ENCODE measurements at regions of chr1 and their contacts with region 1.

Region 1: DNA sequence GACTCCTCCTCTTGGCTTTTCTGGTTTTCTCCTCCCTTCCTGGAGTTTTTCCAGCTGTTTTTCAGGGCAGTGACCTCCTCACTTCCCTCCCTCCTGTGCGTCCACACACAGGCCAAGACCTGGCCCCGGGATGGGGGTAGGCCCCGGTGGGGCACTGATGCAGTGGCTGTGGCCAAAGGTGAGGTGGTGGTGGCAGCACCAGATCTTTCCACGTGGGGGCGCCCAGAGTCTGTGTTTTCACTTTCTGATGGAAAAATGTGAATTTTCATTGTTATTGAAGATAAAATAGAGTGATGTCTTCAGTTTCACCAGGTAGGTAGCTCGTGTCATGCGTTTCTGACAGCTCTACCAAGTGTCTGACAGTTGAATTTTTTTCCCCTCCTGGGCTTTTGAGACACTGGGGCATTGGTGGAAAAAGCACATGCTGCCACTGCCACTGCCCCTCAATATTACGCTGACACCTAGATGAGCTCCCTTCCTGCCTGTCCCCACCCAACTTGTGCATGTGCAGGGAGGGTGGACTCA is 39.9 kb upstream of the MAGOH start:
- ATAC-seq: peak; percentile 28 to 72 (median 54)
- H3K4me3 ChIP-seq: no peak overlapping the region
- H3K27ac ChIP-seq: no peak overlapping the region
- H3K4me1 ChIP-seq: peaks cover 2 to 3% of the 10 kb centered on the region in 2 donors

Region 2: GRCh38 chr1:53381790-53382401 is 103.6 kb after region 1 on chr1:
- in situ Hi-C with region 1: loop called in 4 of 9 experiments (anchors 5 to 25 kb)
- ATAC-seq: peak in 2 of 8 experiments; percentile 21 to 51
- H3K4me3 ChIP-seq: no peak overlapping the region
- H3K27ac ChIP-seq: no peak overlapping the region
- H3K4me1 ChIP-seq: peaks cover 6 to 13% of the 10 kb centered on the region in 2 donors

Region 3: DNA sequence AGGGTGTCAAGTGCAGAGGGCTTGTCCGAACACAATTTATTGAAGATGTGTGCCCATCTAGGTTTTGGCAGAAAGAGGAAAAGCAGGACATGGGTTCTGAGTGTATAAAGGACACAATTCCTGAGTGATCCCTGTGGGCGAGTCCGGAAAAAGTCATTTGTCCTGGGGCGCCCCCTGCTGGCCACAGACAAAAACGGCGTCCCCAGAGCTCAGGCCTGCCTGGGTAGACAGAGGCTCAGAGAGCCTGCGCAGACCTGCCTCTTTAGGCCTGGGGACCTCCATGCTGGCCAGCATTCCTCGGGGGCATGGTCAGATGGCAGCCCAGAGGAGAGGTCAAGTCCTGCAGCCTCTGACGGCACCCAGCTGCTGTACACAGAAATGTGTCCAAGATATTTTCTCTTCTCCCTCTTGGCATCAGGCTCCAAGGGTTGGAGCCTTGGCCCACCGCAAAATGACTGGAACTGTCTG is 115.1 kb after region 1 on chr1:
- in situ Hi-C with region 1: loop called (anchors 5 to 25 kb)
- ATAC-seq: peak; percentile 74 to 94 (median 88)
- H3K4me3 ChIP-seq: no peak overlapping the region
- H3K27ac ChIP-seq: no peak overlapping the region
- H3K4me1 ChIP-seq: peaks cover 34 to 39% of the 10 kb centered on the region in 2 donors

Region 4: DNA sequence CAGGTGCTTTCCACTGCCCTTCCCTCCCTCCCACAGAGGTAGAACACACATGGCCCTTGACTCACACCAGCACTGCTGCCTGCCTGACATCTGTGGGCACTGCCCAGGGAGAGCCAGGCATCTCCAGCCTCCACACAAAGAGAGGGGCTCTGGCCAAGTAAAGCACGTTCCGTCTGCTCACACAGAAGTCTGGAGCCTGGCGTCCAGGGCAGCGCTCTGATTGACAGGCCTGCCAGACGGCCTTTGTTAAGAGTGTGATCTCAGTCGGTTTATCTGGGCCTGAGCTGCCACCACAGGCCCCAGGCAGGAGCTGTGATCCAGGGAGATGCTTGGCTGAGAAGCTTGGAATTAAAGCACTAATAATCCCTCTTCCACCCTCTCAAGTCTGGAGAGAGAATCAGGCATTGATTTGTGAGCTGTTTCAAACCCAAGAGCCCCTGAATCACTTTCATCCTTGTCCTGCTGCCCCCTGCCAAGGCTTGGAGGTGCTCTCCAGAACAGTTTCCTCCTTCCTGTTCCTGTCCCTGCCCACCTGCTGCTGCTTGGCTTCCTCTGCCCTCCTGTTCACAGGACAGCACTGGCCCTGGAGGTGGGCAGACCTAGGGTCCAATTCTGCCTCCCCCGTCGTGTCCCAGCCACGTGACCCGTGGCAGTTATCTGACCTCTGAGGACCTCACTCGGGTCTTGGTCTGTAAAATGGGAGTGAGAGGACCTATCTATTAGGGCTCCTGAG is 184.7 kb after region 1 on chr1:
- in situ Hi-C with region 1: no loop called
- ATAC-seq: peak in 5 of 8 experiments; percentile 26 to 79 (median 31)
- H3K4me3 ChIP-seq: no peak overlapping the region
- H3K27ac ChIP-seq: no peak overlapping the region
- H3K4me1 ChIP-seq: no peaks in the 10 kb centered on the region

Region 5: GRCh38 chr1:53582211-53583020 is 304.2 kb after region 1 on chr1:
- in situ Hi-C with region 1: no loop called
- ATAC-seq: peak in 6 of 8 experiments; percentile 22 to 72 (median 60)
- H3K4me3 ChIP-seq: no peak overlapping the region
- H3K27ac ChIP-seq: no peak overlapping the region
- H3K4me1 ChIP-seq: peaks cover 31 to 32% of the 10 kb centered on the region in 2 donors

Measured in motor neuron (in vitro differentiated cells).